OCI-LY7 (cell line): ENCODE measurements at regions of chr1 and their contacts with region 1.

Region 1: DNA sequence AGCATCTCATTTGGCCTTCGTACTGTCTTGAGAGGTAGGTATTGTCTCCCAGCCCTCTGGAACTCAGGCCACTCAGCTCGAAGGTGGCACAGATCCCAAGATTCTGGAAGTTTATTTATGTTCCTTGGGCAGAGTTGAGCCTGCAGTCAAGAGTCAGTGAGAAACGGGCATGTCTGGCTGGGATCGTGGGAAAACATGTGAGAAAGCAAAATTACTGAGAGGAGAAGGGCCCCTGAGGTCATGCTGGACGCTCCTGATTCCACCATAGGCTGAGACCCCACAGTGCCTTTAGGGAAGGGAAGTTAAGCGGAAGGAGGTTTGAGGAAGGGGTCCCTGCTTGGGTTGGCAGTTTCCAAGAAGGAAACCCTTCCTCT is 12.5 kb upstream of the SEMA4A start:
- DNase-seq: no peak
- H3K4me3 ChIP-seq: no peak overlapping the region
- H3K27ac ChIP-seq: no peak overlapping the region
- H3K4me1 ChIP-seq: no peaks in the 10 kb centered on the region
- CTCF ChIP-seq: no peak

Region 2: GRCh38 chr1:156180471-156180870 is 39.6 kb after region 1 on chr1:
- CTCF ChIA-PET with region 1: no interaction called
- POLR2A ChIA-PET with region 1: no interaction called
- intact Hi-C with region 1: no loop called
- DNase-seq: no peak
- H3K4me3 ChIP-seq: no peak overlapping the region
- H3K27ac ChIP-seq: no peak overlapping the region
- H3K4me1 ChIP-seq: peaks cover 18% of the 10 kb centered on the region
- CTCF ChIP-seq: no peak

Region 3: GRCh38 chr1:156226116-156226538 is 85.3 kb after region 1 on chr1:
- CTCF ChIA-PET with region 1: interaction called, 6 read pairs
- POLR2A ChIA-PET with region 1: interaction called, 18 read pairs
- intact Hi-C with region 1: loop called (anchors 1 kb)
- DNase-seq: no peak
- H3K4me3 ChIP-seq: no peak overlapping the region
- H3K27ac ChIP-seq: peak overlapping the region; percentile 39
- H3K4me1 ChIP-seq: peaks cover 15% of the 10 kb centered on the region
- CTCF ChIP-seq: no peak

Region 4: DNA sequence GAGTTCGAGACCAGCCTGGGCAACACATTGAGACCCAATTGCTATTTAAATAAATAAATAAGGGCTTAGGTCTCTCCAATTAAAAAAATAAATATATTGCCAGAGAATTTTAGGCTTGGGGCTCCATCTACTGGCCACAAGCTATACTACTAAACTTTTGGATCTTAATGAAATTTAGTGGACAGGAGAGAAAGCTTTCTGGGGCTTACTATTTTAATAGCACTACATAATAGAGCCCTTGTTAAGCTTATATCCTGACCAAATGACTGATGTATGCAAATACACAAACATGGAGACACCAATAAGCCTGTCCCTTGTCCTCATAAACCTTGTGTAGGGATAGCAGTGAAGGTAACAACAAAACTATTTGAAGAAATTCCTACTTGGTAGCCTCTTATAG is 178.8 kb after region 1 on chr1:
- CTCF ChIA-PET with region 1: no interaction called
- POLR2A ChIA-PET with region 1: no interaction called
- intact Hi-C with region 1: loop called (anchors 1 kb)
- DNase-seq: peak; percentile 42
- H3K4me3 ChIP-seq: no peak overlapping the region
- H3K27ac ChIP-seq: no peak overlapping the region
- H3K4me1 ChIP-seq: no peaks in the 10 kb centered on the region
- CTCF ChIP-seq: peak; percentile 87

Region 5: GRCh38 chr1:156368889-156369684 is 228.2 kb after region 1 on chr1 and contains the start of gene RHBG:
- CTCF ChIA-PET with region 1: no interaction called
- POLR2A ChIA-PET with region 1: no interaction called
- intact Hi-C with region 1: no loop called
- DNase-seq: no peak
- H3K4me3 ChIP-seq: no peak within 1 kb of the TSS
- H3K27ac ChIP-seq: no peak within 1 kb of the TSS
- H3K4me1 ChIP-seq: no peaks in the 10 kb centered on the region
- CTCF ChIP-seq: no peak
- total RNA-seq, gene RHBG: not detected in 2 replicates

Region 6: GRCh38 chr1:156476501-156477298 is 335.8 kb after region 1 on chr1:
- CTCF ChIA-PET with region 1: no interaction called
- POLR2A ChIA-PET with region 1: no interaction called
- intact Hi-C with region 1: no loop called
- DNase-seq: no peak
- H3K4me3 ChIP-seq: no peak overlapping the region
- H3K27ac ChIP-seq: no peak overlapping the region
- H3K4me1 ChIP-seq: peaks cover 19% of the 10 kb centered on the region
- CTCF ChIP-seq: no peak